HEK293T (cell line): ENCODE measurements at regions of chr5 and their contacts with region 1.

Region 1: GRCh38 chr5:93596676-93597461 is 13.8 kb downstream of the NR2F1 start:
- DNase-seq: peak; percentile 65

Region 2: GRCh38 chr5:93582677-93583438 is 14.0 kb before region 1 on chr5 and contains the start of gene NR2F1:
- CTCF ChIA-PET with region 1: interaction called, 5 read pairs
- POLR2A ChIA-PET with region 1: interaction called, 151 read pairs
- DNase-seq: peak; percentile 75

Region 3: GRCh38 chr5:93620487-93621326 is 23.8 kb after region 1 on chr5:
- CTCF ChIA-PET with region 1: interaction called, 6 read pairs
- POLR2A ChIA-PET with region 1: interaction called, 35 read pairs
- DNase-seq: peak; percentile 78

Region 4: DNA sequence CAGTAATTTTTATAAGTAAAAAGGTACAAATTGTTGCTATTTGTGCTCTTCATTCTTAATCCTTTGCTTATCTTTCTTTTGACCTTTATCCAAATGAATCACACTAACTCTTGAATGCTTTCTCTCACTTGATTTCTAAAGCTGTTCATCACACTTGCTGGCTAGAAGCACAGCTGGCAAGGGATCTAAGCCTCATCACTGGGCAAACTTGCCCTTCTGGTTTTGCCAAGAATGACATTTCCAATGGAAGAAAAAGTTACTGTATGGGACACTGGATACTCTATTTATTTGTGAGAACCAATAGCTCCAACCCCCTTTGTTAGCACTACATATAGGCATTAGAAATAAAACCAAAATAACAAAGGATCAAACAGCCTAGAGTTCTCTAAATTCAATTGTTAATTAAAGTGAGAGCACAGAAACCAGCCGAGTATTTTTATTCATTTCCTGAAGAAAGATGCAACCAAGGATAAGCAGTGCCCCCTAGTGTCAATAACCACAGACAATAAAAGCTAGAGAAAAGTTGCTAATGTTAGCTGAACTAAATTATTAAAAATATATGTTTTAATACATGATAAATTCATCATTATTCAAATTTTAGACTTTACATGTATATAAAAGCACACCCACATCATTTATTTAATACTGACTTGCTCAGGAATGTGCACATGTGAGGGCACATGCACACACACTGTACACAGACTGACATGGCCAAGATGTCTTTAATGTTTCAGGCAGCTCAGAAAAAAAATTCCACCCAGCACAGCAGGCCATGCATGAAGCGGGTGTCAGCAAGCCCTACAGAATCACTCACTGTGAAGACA is 204.3 kb after region 1 on chr5:
- CTCF ChIA-PET with region 1: interaction called, 11 read pairs
- POLR2A ChIA-PET with region 1: interaction called, 8 read pairs
- DNase-seq: no peak